PC-3 (cell line): ENCODE measurements at regions of chr1 and their contacts with region 1.

Region 1: GRCh38 chr1:241130881-241131280 is 226.1 kb downstream of the RGS7 start:
- DNase-seq: no peak
- ATAC-seq: no peak
- H3K4me3 ChIP-seq: no peak overlapping the region
- H3K27ac ChIP-seq: no peak overlapping the region
- H3K4me1 ChIP-seq: no peaks in the 10 kb centered on the region
- H3K27me3 ChIP-seq: peaks cover 91% of the 10 kb centered on the region
- CTCF ChIP-seq: no peak

Region 2: GRCh38 chr1:241109039-241109438 is 21.8 kb before region 1 on chr1:
- CTCF ChIA-PET with region 1: interaction called, 4 read pairs
- POLR2A ChIA-PET with region 1: no interaction called
- intact Hi-C with region 1: loop called (anchors 2 kb)
- DNase-seq: no peak
- ATAC-seq: no peak
- H3K4me3 ChIP-seq: no peak overlapping the region
- H3K27ac ChIP-seq: no peak overlapping the region
- H3K4me1 ChIP-seq: no peaks in the 10 kb centered on the region
- H3K27me3 ChIP-seq: peaks cover 95% of the 10 kb centered on the region
- CTCF ChIP-seq: no peak

Region 3: DNA sequence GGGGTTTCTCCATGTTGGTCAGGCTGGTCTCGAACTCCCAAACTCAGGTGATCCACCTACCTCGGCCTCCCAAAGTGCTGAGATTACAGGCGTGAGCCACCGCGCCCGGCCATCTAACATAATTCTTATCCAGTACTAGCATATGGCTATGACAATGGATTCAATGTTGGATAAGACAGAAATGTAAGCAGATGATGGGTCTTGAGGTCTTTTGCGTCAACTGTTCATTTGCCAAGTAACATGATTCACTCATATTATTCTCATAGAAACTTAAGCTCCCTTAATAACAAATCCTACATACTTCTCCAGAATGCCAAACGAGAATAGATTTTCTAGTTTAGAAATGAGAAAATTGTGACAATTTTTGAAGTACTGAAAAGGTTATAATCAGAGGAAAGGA is 55.8 kb after region 1 on chr1:
- CTCF ChIA-PET with region 1: no interaction called
- POLR2A ChIA-PET with region 1: no interaction called
- intact Hi-C with region 1: loop called (anchors 2 kb)
- DNase-seq: peak; percentile 49
- ATAC-seq: no peak
- H3K4me3 ChIP-seq: no peak overlapping the region
- H3K27ac ChIP-seq: no peak overlapping the region
- H3K4me1 ChIP-seq: no peaks in the 10 kb centered on the region
- H3K27me3 ChIP-seq: peaks cover 92% of the 10 kb centered on the region
- CTCF ChIP-seq: no peak

Region 4: DNA sequence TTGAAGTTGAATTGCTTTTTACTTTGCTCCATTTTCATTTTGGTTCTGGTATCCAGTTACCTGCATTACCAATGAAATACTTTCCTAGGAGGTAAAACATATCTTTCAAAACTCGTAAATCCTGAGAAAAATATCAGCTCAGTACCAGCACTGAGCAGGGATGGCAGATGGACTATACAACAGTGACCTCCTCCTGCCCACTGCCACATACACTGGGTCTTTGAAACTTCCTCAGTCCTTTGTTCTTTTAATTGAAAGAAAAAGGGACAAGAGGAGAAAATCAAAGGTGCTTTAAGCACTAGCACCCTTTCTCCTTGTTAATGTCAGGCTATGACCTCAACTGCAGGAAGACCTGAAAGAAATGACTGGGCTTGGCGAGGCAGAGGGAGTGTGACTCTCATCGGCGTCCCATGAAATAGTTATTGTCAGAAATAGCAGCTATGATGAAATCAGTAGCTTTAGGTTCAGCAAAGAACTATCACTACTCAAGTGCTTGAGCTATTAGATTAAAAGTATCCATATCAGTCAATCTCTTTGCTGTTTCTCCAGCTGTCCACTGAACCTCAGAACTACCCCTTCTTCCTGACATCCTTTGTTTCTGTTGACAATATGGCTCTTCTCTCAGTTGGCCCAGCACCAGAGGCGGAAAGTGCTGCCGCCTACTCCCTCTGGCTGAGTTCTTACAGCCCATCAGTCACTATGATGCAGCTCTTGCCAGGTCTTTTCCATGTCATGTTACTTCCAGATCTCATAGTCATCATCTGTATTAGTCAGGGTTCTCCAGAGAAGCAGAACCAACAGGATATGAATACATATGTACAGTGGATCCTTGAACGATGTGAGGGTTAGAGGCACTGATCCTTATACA is 1075.0 kb after region 1 on chr1:
- CTCF ChIA-PET with region 1: no interaction called
- POLR2A ChIA-PET with region 1: no interaction called
- intact Hi-C with region 1: no loop called
- DNase-seq: peak; percentile 64
- ATAC-seq: peak; percentile 71
- H3K4me3 ChIP-seq: no peak overlapping the region
- H3K27ac ChIP-seq: peak overlapping the region; percentile 33
- H3K4me1 ChIP-seq: peaks cover 4% of the 10 kb centered on the region; the same call in 1 of the 2 replicates
- H3K27me3 ChIP-seq: no peaks in the 10 kb centered on the region
- CTCF ChIP-seq: no peak